ENCODE measurements at regions of chr15 and their contacts with region 1.

Region 1: GRCh38 chr15:90907838-90908507 is 4.9 kb downstream of the MAN2A2 start:
- DNase-seq: no peak

Region 2: DNA sequence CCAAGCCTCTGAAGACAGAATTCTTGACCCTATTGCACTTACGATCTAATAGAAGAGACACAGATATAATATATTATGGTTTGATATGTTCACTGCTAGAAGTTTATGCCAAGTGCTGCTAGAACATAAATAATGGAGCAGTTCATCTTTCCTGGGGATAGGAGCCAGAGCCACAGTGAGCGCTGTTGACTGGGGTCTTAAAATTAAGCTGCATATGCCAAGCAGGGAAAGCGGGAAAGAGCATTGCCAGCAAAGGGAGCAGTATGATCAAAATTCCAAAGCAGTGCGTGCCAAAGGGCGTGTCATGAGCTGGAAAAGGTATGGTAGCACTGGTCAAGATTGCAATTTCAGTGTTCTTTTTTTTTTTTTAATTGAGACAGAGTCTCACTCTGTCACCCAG is 1868.8 kb before region 1 on chr15:
- intact Hi-C with region 1: loop called in 1 of 2 experiments (anchors 5 kb)
- DNase-seq: no peak

Region 3: DNA sequence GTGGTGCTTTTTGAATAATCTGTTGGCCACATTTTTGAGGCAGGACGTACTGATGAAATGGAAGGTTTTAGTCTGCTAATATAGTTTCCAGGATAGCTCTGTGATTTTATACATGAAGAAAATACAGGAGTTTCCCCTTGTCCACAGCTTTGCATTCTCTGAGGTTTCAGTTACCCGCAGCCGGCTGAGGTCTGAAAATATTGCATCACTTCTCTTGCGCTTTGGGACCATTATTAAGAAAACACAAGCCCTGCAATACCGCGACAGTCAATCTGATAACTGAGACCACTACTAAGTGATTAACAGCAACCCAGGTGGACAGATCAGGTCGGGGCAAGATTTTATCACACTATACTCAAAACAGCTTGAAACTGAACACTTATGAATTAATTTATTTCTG is 157.8 kb before region 1 on chr15:
- intact Hi-C with region 1: no loop called
- DNase-seq: no peak